ENCODE measurements at regions of chr2 and their contacts with region 1.

Region 1: DNA sequence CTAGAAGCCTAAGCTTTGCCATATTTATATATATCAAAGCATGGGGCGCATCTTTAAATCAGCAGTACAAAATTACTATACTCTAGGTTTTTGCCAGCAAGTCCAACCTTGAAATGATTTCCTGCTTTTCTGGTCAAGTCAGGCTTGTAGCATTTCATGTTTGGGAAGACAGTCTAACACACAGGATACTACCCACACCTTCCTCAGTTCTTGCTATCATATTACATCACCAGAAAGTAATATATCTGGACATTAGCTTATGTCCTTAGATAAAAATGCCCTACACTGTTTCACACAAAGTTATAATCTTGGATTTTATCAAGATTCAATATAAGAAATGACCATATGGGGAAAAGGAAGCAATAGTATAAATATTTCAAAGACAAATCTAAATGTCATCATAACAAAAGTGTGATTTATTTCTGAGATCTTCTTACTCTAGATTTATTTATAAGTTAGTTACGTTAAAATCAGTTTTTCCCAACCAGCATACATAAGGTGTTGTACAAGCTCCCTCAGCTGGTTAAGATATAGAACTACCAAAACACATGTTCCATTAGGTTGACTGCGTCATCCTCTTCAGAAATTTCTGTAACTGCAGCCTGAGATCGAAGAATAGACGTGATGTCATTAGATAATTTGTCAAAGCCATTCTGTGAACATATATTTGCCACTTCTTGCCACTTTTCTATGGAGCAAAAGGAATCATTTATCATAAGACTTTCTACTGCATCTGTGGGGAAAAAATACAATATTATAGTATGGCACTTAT is 56.7 kb downstream of the CLHC1 start:
- DNase-seq: peak; percentile 80

Region 2: GRCh38 chr2:54723131-54723995 is 452.1 kb before region 1 on chr2 and contains the start of gene EML6:
- in situ Hi-C with region 1: loop called (anchors 25 kb)
- DNase-seq: peak; percentile 99
- total RNA-seq, gene EML6: 0.24 and 0.95 TPM in 2 replicates

Region 3: DNA sequence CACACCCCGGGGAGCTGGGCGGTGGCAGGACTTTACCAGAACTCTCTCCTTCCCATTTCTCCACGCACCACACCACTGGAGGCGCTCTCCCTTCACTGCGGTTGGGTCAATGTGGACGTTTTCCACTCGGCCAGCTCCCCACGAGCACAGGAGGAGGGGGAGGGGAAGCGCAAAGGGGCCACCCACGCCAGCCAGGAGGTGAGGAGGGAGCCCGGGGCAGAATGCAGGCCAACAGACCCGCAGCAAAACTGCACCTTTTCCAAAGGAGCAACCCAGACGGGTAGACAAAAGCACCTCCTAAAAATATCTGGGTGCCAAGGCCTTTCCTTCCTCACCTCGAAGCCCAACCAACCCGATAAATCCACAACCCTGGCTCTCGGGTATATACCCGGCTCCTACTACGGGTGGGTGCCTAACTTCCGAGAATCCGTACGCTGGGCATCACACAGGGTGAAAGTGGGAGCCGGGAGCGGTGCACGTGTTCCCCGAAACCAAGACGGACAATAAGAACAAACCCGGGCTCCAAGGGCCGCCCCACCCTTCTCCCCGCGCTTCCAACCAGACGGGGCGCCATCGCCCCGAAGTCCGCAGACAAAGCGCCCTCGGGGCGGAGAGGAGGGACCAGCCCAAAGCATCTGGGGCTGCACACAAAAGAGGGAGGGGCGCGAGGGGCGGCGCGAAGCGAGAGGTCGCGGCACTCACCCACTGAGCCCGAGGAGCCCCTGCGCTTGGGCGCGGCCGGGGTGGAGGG is 126.2 kb before region 1 on chr2:
- in situ Hi-C with region 1: loop called (anchors 25 kb)
- DNase-seq: peak; percentile 86

Region 4: GRCh38 chr2:55111570-55112228 is 63.7 kb before region 1 on chr2:
- in situ Hi-C with region 1: no loop called
- DNase-seq: peak; percentile 82